ENCODE measurements at regions of chr6 and their contacts with region 1.

Region 1: GRCh38 chr6:106022801-106023200 is 63.3 kb upstream of the PRDM1 start:
- DNase-seq: no peak
- H3K4me3 ChIP-seq: no peak overlapping the region
- H3K27ac ChIP-seq: no peak overlapping the region
- H3K4me1 ChIP-seq: no peaks in the 10 kb centered on the region
- H3K27me3 ChIP-seq: no peaks in the 10 kb centered on the region
- CTCF ChIP-seq: no peak

Region 2: GRCh38 chr6:106063448-106063850 is 40.6 kb after region 1 on chr6:
- CTCF ChIA-PET with region 1: no interaction called
- dilution Hi-C with region 1: loop called (anchors 5 kb)
- in situ Hi-C with region 1: no loop called
- intact Hi-C with region 1: no loop called
- DNase-seq: peak; percentile 91
- H3K4me3 ChIP-seq: no peak overlapping the region
- H3K27ac ChIP-seq: peak overlapping the region; percentile 65
- H3K4me1 ChIP-seq: peaks cover 19% of the 10 kb centered on the region
- H3K27me3 ChIP-seq: no peaks in the 10 kb centered on the region
- CTCF ChIP-seq: no peak

Region 3: GRCh38 chr6:106103728-106104109 is 80.9 kb after region 1 on chr6:
- CTCF ChIA-PET with region 1: no interaction called
- dilution Hi-C with region 1: no loop called
- in situ Hi-C with region 1: no loop called
- intact Hi-C with region 1: no loop called
- DNase-seq: peak; percentile 59
- H3K4me3 ChIP-seq: peak overlapping the region; percentile 22 to 40 (median 27)
- H3K27ac ChIP-seq: peak overlapping the region; percentile 53
- H3K4me1 ChIP-seq: peaks cover 27% of the 10 kb centered on the region
- H3K27me3 ChIP-seq: no peaks in the 10 kb centered on the region
- CTCF ChIP-seq: no peak

Measured in mammary epithelial cell (primary cell).